ENCODE measurements at regions of chr15 and their contacts with region 1.

Region 1: GRCh38 chr15:81296673-81297072 is 27.3 kb downstream of the STARD5 start:
- DNase-seq: peak; percentile 72 to 93 (median 89)
- H3K4me3 ChIP-seq: peak overlapping the region; percentile 49 to 84 (median 73)
- H3K27ac ChIP-seq: peak overlapping the region; percentile 55 to 73
- H3K4me1 ChIP-seq: peaks cover 59 to 100% (median 98%) of the 10 kb centered on the region in 4 experiments
- H3K27me3 ChIP-seq: no peaks in the 10 kb centered on the region

Region 2: DNA sequence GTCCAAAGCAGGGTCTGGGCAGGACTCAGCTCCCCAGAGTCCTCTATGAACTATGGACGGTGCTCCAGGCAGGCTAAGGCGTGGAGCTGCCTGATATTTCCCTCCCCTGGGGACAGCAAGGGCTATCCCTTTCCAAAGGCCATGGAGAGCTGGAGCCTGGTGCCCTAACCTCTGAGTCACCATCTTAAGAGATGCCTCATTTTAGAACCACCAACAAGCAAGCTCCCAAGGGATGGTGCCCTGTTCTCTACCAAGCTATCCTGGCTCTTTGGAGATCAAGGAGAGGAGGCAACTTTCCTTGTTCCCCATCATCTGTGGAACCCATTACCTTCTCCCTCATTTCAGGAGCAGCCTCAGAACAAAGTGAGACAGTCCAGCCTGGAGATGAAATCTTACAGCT is 11.6 kb after region 1 on chr15:
- CTCF ChIA-PET with region 1: interaction called, 12 read pairs
- POLR2A ChIA-PET with region 1: interaction called, 5 read pairs
- DNase-seq: no peak
- H3K4me3 ChIP-seq: no peak overlapping the region
- H3K27ac ChIP-seq: no peak overlapping the region
- H3K4me1 ChIP-seq: peaks cover 24 to 49% (median 45%) of the 10 kb centered on the region in 4 experiments
- H3K27me3 ChIP-seq: no peaks in the 10 kb centered on the region

Region 3: GRCh38 chr15:81327516-81327915 is 30.8 kb after region 1 on chr15:
- CTCF ChIA-PET with region 1: interaction called, 11 read pairs
- POLR2A ChIA-PET with region 1: interaction called, 3 read pairs
- DNase-seq: no peak
- H3K4me3 ChIP-seq: no peak overlapping the region
- H3K27ac ChIP-seq: no peak overlapping the region
- H3K4me1 ChIP-seq: peaks cover 4 to 30% (median 25%) of the 10 kb centered on the region in 4 experiments
- H3K27me3 ChIP-seq: no peaks in the 10 kb centered on the region

Measured in common myeloid progenitor, CD34-positive (primary cell).